Breast epithelium (tissue), 4 donors: ENCODE measurements at regions of chr7 and their contacts with region 1.

Region 1: DNA sequence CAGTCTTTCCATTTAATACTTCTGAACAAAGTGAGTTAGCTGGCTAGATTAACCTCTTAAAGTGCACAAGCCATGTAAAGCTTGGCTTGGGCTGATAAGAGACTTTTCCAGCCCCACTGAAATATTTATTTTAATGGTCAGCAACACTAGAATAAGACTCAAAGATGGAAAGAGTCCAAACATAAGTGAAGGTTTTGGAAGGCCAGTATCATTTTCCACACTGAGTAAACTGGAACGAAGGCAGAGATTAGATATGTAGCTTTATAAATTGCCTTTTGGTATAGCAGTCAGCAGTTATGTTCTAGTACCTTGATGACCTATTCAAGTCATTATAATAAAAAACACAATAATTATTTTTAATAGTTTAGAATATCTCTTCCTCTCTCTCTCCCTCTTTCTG is 102.2 kb downstream of the HDAC9 start:
- DNase-seq: no peak
- H3K4me3 ChIP-seq: no peak overlapping the region
- H3K27ac ChIP-seq: no peak overlapping the region
- H3K4me1 ChIP-seq: no peaks in the 10 kb centered on the region
- H3K27me3 ChIP-seq: no peaks in the 10 kb centered on the region
- CTCF ChIP-seq: no peak
- POLR2A ChIP-seq: no peak

Region 2: DNA sequence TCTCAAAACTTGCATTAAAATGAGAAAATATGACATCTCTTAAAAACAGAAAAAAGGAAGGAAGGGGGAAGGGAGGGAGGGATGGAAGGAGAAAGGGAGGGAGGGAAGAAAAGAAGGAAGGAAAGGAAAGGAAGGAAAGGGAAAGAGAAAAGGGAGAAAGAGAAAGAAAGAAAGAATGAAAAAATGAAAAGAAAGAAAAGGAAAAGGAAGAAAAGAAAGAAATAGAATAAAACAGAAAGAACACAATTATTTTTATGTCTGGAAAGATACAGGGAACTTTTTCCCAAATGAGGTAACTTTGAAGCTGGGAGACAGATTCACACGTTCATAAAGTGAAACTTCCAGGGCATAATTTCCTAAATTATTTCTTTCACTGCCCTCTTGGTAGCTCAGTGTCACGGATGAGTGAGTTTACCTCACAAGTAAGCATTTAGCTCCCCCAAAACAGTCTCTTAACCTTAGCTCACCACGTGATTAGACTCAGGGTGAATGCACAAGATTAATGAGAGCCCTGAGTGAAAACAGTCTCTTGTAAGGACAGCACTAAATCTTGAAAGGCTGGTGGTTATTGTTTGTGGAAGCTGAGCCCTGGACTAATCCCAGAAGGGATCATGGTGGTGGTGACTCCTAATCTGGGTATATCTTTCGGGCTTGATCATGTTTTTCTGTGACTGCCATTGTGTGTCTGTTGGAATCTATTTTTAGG is 176.3 kb before region 1 on chr7:
- intact Hi-C with region 1: no loop called
- DNase-seq: no peak
- H3K4me3 ChIP-seq: no peak overlapping the region
- H3K27ac ChIP-seq: no peak overlapping the region
- H3K4me1 ChIP-seq: no peaks in the 10 kb centered on the region
- H3K27me3 ChIP-seq: no peaks in the 10 kb centered on the region
- CTCF ChIP-seq: no peak
- POLR2A ChIP-seq: no peak

Region 3: DNA sequence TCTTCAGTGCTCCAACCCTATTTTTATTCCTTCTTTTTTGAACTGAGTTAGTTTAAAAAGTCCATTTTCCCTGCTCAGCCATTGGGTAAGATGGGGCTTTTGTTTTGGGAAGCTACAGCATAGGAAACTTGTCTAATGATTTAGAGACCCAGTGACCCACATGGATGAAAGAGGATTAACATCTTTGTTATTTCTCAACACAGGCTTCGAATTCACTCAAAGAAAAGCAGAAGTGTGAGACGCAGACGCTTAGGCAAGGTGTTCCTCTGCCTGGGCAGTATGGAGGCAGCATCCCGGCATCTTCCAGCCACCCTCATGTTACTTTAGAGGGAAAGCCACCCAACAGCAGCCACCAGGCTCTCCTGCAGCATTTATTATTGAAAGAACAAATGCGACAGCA is 49.8 kb after region 1 on chr7:
- intact Hi-C with region 1: loop called (anchors 2 kb)
- DNase-seq: no peak
- H3K4me3 ChIP-seq: no peak overlapping the region
- H3K27ac ChIP-seq: no peak overlapping the region
- H3K4me1 ChIP-seq: no peaks in the 10 kb centered on the region
- H3K27me3 ChIP-seq: no peaks in the 10 kb centered on the region
- CTCF ChIP-seq: no peak
- POLR2A ChIP-seq: no peak